ENCODE measurements at regions of chr11 and their contacts with region 1.

Region 1: DNA sequence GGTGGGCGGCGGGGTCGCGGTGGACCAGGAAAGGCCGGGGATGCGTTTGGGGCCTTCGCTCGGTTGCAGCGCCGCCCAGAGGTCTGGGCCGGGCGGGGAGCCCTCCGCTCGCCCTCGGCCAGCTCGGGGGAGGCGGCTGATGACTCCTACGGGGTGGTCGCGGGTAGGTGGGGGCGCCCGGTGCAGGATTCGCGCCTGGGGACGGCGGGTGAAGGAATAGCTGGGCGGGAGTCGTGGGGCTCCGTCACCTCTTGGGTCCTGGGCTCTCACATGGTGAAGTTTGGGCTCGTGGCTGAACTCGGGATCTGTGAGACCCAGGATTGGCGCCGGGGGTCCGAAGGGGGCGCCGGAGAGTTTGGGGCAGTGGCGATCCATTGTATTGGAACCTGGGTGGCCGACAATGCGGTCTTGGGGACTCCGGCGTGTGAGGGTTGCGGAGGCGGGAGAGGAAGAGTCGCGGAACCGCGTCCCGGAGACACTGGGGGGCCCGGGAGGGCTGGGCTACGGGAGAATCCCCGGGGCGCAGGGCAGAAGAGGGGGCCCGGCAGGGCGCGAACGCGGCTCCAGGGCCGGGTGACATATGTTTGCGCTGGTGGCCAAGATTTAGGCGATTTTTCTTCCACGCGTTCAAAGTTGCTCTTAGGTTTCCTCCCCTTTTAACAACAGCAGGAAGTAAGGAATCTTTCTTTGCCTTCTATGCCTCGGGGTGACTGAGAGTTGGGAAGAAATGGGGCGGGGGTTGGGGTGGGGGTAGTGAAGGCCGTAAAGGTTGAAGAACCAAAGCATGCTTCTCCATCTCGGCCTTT is 935 bp downstream of the QSER1 start:
- DNase-seq: peak; percentile 8
- H3K4me3 ChIP-seq: peak overlapping the region; percentile 86 to 91
- H3K27ac ChIP-seq: peak overlapping the region; percentile 82 to 87
- H3K4me1 ChIP-seq: no peaks in the 10 kb centered on the region
- H3K27me3 ChIP-seq: no peaks in the 10 kb centered on the region
- CTCF ChIP-seq: peak in 3 of 4 experiments; percentile 27 to 42 (median 41)
- POLR2A ChIP-seq: no peak

Region 2: GRCh38 chr11:32583459-32584271 is 309.9 kb before region 1 on chr11 and contains the start of gene EIF3M:
- intact Hi-C with region 1: loop called (anchors 10 kb)
- DNase-seq: peak; percentile 94
- H3K4me3 ChIP-seq: peak within 1 kb of the TSS; percentile 68 to 79
- H3K27ac ChIP-seq: peak within 1 kb of the TSS; percentile 61 to 65
- H3K4me1 ChIP-seq: no peaks in the 10 kb centered on the region
- H3K27me3 ChIP-seq: no peaks in the 10 kb centered on the region
- CTCF ChIP-seq: no peak
- POLR2A ChIP-seq: peak; percentile 48
- total RNA-seq, gene EIF3M: 353 to 458 TPM

Region 3: GRCh38 chr11:33039274-33040032 is 145.9 kb after region 1 on chr11 and contains the start of gene TCP11L1:
- intact Hi-C with region 1: loop called (anchors 10 kb)
- DNase-seq: peak; percentile 91
- H3K4me3 ChIP-seq: peak within 1 kb of the TSS; percentile 91 to 92
- H3K27ac ChIP-seq: peak within 1 kb of the TSS; percentile 95 to 96
- H3K4me1 ChIP-seq: no peaks in the 10 kb centered on the region
- H3K27me3 ChIP-seq: no peaks in the 10 kb centered on the region
- CTCF ChIP-seq: peak in 1 of 4 experiments; percentile 23
- POLR2A ChIP-seq: peak; percentile 54
- total RNA-seq, gene TCP11L1: 15.3 to 27.1 TPM

Region 4: GRCh38 chr11:33094157-33094556 is 200.6 kb after region 1 on chr11:
- intact Hi-C with region 1: no loop called
- DNase-seq: no peak
- H3K4me3 ChIP-seq: no peak overlapping the region
- H3K27ac ChIP-seq: no peak overlapping the region
- H3K4me1 ChIP-seq: no peaks in the 10 kb centered on the region
- H3K27me3 ChIP-seq: no peaks in the 10 kb centered on the region
- CTCF ChIP-seq: no peak
- POLR2A ChIP-seq: no peak

Measured in prostate gland (tissue), 2 donors.